ENCODE measurements at regions of chr2 and their contacts with region 1.

Region 1: GRCh38 chr2:57516698-57517340 is 529.8 kb upstream of the VRK2 start:
- DNase-seq: peak; percentile 13 to 41 (median 35)
- H3K4me3 ChIP-seq: no peak overlapping the region
- H3K4me3 Mint-ChIP-seq: no peak overlapping the region
- H3K27ac ChIP-seq: no peak overlapping the region
- H3K27ac Mint-ChIP-seq: no peak overlapping the region
- H3K4me1 ChIP-seq: no peaks in the 10 kb centered on the region
- H3K4me1 Mint-ChIP-seq: peaks cover 7% of the 10 kb centered on the region
- H3K27me3 ChIP-seq: no peaks in the 10 kb centered on the region
- H3K27me3 Mint-ChIP-seq: peaks cover 0 to 1% (median 1%) of the 10 kb centered on the region in 3 donors
- CTCF ChIP-seq: peak; percentile 80

Region 2: GRCh38 chr2:56183643-56184499 is 1332.9 kb before region 1 on chr2 and contains the start of gene CCDC85A:
- intact Hi-C with region 1: loop called in 1 of 2 experiments (anchors 2 kb)
- DNase-seq: peak; percentile 32 to 56 (median 42)
- H3K4me3 ChIP-seq: peak within 1 kb of the TSS in 2 of 3 experiments; percentile 23 to 70
- H3K4me3 Mint-ChIP-seq: peak within 1 kb of the TSS; percentile 47 to 89
- H3K27ac ChIP-seq: no peak within 1 kb of the TSS
- H3K27ac Mint-ChIP-seq: no peak within 1 kb of the TSS
- H3K4me1 ChIP-seq: peaks cover 7 to 19% of the 10 kb centered on the region in 2 donors
- H3K4me1 Mint-ChIP-seq: peaks cover 12% of the 10 kb centered on the region
- H3K27me3 ChIP-seq: peaks cover 51 to 52% of the 10 kb centered on the region in 2 donors
- H3K27me3 Mint-ChIP-seq: peaks cover 39 to 75% (median 51%) of the 10 kb centered on the region in 3 donors
- CTCF ChIP-seq: peak; percentile 87
- polyA plus RNA-seq, gene CCDC85A: not detected

Region 3: GRCh38 chr2:57376985-57377384 is 139.8 kb before region 1 on chr2:
- intact Hi-C with region 1: loop called in 1 of 2 experiments (anchors 10 kb)
- DNase-seq: peak in 1 of 3 donors; percentile 3
- H3K4me3 ChIP-seq: no peak overlapping the region
- H3K4me3 Mint-ChIP-seq: no peak overlapping the region
- H3K27ac ChIP-seq: no peak overlapping the region
- H3K27ac Mint-ChIP-seq: no peak overlapping the region
- H3K4me1 ChIP-seq: no peaks in the 10 kb centered on the region
- H3K4me1 Mint-ChIP-seq: no peaks in the 10 kb centered on the region
- H3K27me3 ChIP-seq: no peaks in the 10 kb centered on the region
- H3K27me3 Mint-ChIP-seq: no peaks in the 10 kb centered on the region
- CTCF ChIP-seq: peak; percentile 38

Region 4: DNA sequence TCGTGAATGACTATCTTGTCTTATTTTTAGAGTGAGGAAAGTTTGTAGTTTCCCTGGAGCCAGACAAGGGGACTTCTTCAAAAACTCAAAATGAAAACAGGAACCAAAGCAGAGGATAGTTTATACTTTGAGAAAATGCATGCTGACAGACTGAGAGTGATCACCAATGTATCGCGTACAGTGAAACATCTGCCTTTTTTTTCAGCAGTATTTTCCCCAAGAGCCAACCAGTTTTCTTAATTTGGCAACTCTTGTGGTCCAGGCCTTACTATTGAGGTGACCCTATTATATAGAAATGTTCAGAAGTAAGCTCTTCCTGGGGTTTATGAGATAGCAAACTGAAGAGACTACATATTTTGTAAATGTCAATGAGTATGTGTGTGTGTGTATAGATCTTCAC is 376.1 kb after region 1 on chr2:
- intact Hi-C with region 1: no loop called
- DNase-seq: peak; percentile 51 to 87 (median 66)
- H3K4me3 ChIP-seq: no peak overlapping the region
- H3K4me3 Mint-ChIP-seq: no peak overlapping the region
- H3K27ac ChIP-seq: peak overlapping the region in 1 of 2 donors; percentile 73
- H3K27ac Mint-ChIP-seq: peak overlapping the region; percentile 19 to 89 (median 78)
- H3K4me1 ChIP-seq: peaks cover 6 to 18% of the 10 kb centered on the region in 2 donors
- H3K4me1 Mint-ChIP-seq: peaks cover 19% of the 10 kb centered on the region
- H3K27me3 ChIP-seq: no peaks in the 10 kb centered on the region
- H3K27me3 Mint-ChIP-seq: peaks cover 0 to 2% (median 0%) of the 10 kb centered on the region in 3 donors
- CTCF ChIP-seq: no peak

Measured in CD14-positive monocyte (primary cell).